Caco-2 (cell line): ENCODE measurements at regions of chr1 and their contacts with region 1.

Region 1: GRCh38 chr1:241985787-241986186 is 13.1 kb downstream of the MAP1LC3C start:
- DNase-seq: peak; percentile 52 to 60
- H3K4me3 ChIP-seq: no peak overlapping the region
- H3K4me3 Mint-ChIP-seq: no peak overlapping the region
- H3K27ac Mint-ChIP-seq: no peak overlapping the region
- H3K4me1 ChIP-seq: no peaks in the 10 kb centered on the region
- H3K4me1 Mint-ChIP-seq: no peaks in the 10 kb centered on the region
- H3K27me3 ChIP-seq: no peaks in the 10 kb centered on the region
- H3K27me3 Mint-ChIP-seq: no peaks in the 10 kb centered on the region
- CTCF ChIP-seq: peak; percentile 57 to 66

Region 2: GRCh38 chr1:241895013-241895412 is 90.8 kb before region 1 on chr1:
- CTCF ChIA-PET with region 1: interaction called, 13 read pairs
- POLR2A ChIA-PET with region 1: no interaction called
- intact Hi-C with region 1: loop called (anchors 1 kb)
- DNase-seq: no peak
- H3K4me3 ChIP-seq: no peak overlapping the region
- H3K4me3 Mint-ChIP-seq: no peak overlapping the region
- H3K27ac Mint-ChIP-seq: no peak overlapping the region
- H3K4me1 ChIP-seq: peaks cover 4% of the 10 kb centered on the region; the same call in 1 of the 2 replicates
- H3K4me1 Mint-ChIP-seq: no peaks in the 10 kb centered on the region
- H3K27me3 ChIP-seq: no peaks in the 10 kb centered on the region
- H3K27me3 Mint-ChIP-seq: no peaks in the 10 kb centered on the region
- CTCF ChIP-seq: no peak

Region 3: GRCh38 chr1:242065813-242066212 is 80.0 kb after region 1 on chr1:
- CTCF ChIA-PET with region 1: no interaction called
- POLR2A ChIA-PET with region 1: no interaction called
- intact Hi-C with region 1: no loop called
- DNase-seq: no peak
- H3K4me3 ChIP-seq: no peak overlapping the region
- H3K4me3 Mint-ChIP-seq: no peak overlapping the region
- H3K27ac Mint-ChIP-seq: no peak overlapping the region
- H3K4me1 ChIP-seq: no peaks in the 10 kb centered on the region
- H3K4me1 Mint-ChIP-seq: no peaks in the 10 kb centered on the region
- H3K27me3 ChIP-seq: no peaks in the 10 kb centered on the region
- H3K27me3 Mint-ChIP-seq: peaks cover 15% of the 10 kb centered on the region
- CTCF ChIP-seq: no peak